CD4-positive, alpha-beta memory T cell (primary cell): ENCODE measurements at regions of chr10 and their contacts with region 1.

Region 1: GRCh38 chr10:88810196-88810961 is 7.8 kb downstream of the LIPM start:
- DNase-seq: peak; percentile 42 to 56 (median 45)
- H3K4me3 ChIP-seq: no peak overlapping the region
- H3K4me3 Mint-ChIP-seq: no peak overlapping the region
- H3K27ac ChIP-seq: no peak overlapping the region
- H3K27ac Mint-ChIP-seq: peak overlapping the region in 2 of 7 donors; percentile 16 to 30
- H3K4me1 ChIP-seq: peaks cover 10% of the 10 kb centered on the region
- H3K4me1 Mint-ChIP-seq: peaks cover 10 to 18% (median 15%) of the 10 kb centered on the region in 4 donors
- H3K27me3 ChIP-seq: no peaks in the 10 kb centered on the region
- H3K27me3 Mint-ChIP-seq: no peaks in the 10 kb centered on the region

Region 2: GRCh38 chr10:87519582-87519981 is 1290.8 kb before region 1 on chr10:
- CTCF ChIA-PET with region 1: no interaction called
- POLR2A ChIA-PET with region 1: no interaction called
- intact Hi-C with region 1: no loop called
- DNase-seq: no peak
- H3K4me3 ChIP-seq: no peak overlapping the region
- H3K4me3 Mint-ChIP-seq: no peak overlapping the region
- H3K27ac ChIP-seq: no peak overlapping the region
- H3K27ac Mint-ChIP-seq: peak overlapping the region in 1 of 7 donors; percentile 1
- H3K4me1 ChIP-seq: no peaks in the 10 kb centered on the region
- H3K4me1 Mint-ChIP-seq: peaks cover 0 to 5% (median 2%) of the 10 kb centered on the region in 4 donors
- H3K27me3 ChIP-seq: no peaks in the 10 kb centered on the region
- H3K27me3 Mint-ChIP-seq: no peaks in the 10 kb centered on the region

Region 3: DNA sequence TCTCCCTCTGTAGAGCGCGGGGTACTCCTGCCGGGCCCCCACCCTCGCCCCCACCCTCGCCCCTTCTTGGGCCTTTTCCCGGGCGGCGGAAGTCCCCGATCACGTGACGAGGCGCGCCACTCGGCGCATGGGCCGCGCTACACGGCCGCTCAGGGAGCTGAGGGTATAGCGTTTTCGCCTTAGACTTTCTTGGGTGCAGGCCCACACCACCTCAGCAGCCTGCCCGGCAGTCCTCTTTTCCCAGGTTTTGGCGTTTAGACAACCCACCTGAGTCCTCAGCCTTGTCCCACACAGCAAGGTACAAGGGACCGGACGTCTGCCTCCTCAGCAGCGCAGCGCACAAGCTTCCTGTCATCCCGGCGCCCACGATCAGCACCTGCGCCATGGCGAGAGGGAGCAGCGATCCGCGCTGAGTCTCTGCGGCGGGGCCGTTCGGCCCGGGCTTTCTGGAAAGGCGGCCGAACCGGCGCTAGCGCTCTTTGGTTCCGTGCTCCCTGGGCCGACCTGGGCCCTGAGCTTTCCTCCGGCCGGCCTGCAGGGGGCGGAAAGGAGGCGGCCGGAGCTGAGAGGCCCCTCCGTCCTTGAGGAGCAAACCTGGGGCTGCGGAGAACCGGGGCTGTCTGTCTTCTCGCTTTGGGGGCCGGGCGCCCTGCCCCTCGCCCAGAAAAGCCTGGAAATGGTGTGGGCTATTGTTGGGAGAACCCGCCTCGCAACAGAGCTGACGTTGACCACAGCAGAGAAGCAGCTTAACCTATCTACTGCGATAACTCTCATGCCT is 227.4 kb before region 1 on chr10 and contains the start of gene RNLS:
- CTCF ChIA-PET with region 1: no interaction called
- POLR2A ChIA-PET with region 1: no interaction called
- intact Hi-C with region 1: loop called (anchors 1 kb)
- DNase-seq: peak; percentile 60 to 73 (median 65)
- H3K4me3 ChIP-seq: peak within 1 kb of the TSS; percentile 72 to 89
- H3K4me3 Mint-ChIP-seq: peak within 1 kb of the TSS; percentile 91 to 96 (median 93)
- H3K27ac ChIP-seq: peak within 1 kb of the TSS; percentile 77
- H3K27ac Mint-ChIP-seq: peak within 1 kb of the TSS; percentile 78 to 96 (median 93)
- H3K4me1 ChIP-seq: peaks cover 7% of the 10 kb centered on the region
- H3K4me1 Mint-ChIP-seq: peaks cover 6 to 26% (median 14%) of the 10 kb centered on the region in 4 donors
- H3K27me3 ChIP-seq: no peaks in the 10 kb centered on the region
- H3K27me3 Mint-ChIP-seq: no peaks in the 10 kb centered on the region
- total RNA-seq, gene RNLS: 1.7 to 1.9 TPM

Region 4: DNA sequence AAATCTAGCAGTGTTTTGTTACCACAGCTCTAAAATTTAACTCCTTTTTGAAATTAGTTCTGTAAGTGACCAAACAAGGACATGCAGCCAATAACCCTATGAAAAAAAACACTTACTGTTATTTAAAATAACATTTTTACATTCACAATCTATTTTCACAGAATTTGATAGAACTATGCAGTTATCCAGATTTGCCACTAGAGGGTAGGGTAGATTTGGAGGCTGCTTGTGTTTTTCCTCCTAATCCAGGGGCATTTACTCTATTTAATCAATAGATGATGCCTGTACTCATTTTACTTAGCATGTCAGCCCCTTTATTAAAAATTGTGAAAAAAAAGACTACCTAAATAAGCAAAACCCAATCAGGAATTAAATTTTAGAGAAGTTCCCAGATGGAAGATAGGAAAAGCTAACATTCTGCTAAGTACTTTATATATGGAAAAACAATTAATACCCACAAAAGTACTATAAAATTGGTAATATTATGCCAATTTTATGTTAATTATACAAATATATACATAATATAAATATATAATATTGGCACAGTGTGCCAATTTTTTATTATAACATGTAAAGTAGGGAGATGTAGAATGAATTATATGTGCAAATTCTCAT is 122.4 kb before region 1 on chr10:
- CTCF ChIA-PET with region 1: interaction called, 51 read pairs
- POLR2A ChIA-PET with region 1: no interaction called
- intact Hi-C with region 1: loop called (anchors 1 kb)
- DNase-seq: peak in 4 of 5 donors; percentile 18 to 26 (median 21)
- H3K4me3 ChIP-seq: no peak overlapping the region
- H3K4me3 Mint-ChIP-seq: no peak overlapping the region
- H3K27ac ChIP-seq: no peak overlapping the region
- H3K27ac Mint-ChIP-seq: no peak overlapping the region
- H3K4me1 ChIP-seq: no peaks in the 10 kb centered on the region
- H3K4me1 Mint-ChIP-seq: no peaks in the 10 kb centered on the region
- H3K27me3 ChIP-seq: no peaks in the 10 kb centered on the region
- H3K27me3 Mint-ChIP-seq: peaks cover 0 to 2% of the 10 kb centered on the region in 2 donors

Region 5: GRCh38 chr10:88820748-88821389 is 10.5 kb after region 1 on chr10:
- CTCF ChIA-PET with region 1: interaction called, 146 read pairs
- POLR2A ChIA-PET with region 1: interaction called, 4 read pairs
- intact Hi-C with region 1: loop called (anchors 1 kb)
- DNase-seq: peak in 1 of 5 donors; percentile 28
- H3K4me3 ChIP-seq: no peak overlapping the region
- H3K4me3 Mint-ChIP-seq: peak overlapping the region in 2 of 8 donors; percentile 16 to 33
- H3K27ac ChIP-seq: no peak overlapping the region
- H3K27ac Mint-ChIP-seq: peak overlapping the region in 3 of 7 donors; percentile 6 to 61 (median 31)
- H3K4me1 ChIP-seq: peaks cover 35% of the 10 kb centered on the region
- H3K4me1 Mint-ChIP-seq: peaks cover 27 to 62% (median 47%) of the 10 kb centered on the region in 4 donors
- H3K27me3 ChIP-seq: no peaks in the 10 kb centered on the region
- H3K27me3 Mint-ChIP-seq: no peaks in the 10 kb centered on the region